Body of pancreas (tissue), 4 donors: ENCODE measurements at regions of chr2 and their contacts with region 1.

Region 1: DNA sequence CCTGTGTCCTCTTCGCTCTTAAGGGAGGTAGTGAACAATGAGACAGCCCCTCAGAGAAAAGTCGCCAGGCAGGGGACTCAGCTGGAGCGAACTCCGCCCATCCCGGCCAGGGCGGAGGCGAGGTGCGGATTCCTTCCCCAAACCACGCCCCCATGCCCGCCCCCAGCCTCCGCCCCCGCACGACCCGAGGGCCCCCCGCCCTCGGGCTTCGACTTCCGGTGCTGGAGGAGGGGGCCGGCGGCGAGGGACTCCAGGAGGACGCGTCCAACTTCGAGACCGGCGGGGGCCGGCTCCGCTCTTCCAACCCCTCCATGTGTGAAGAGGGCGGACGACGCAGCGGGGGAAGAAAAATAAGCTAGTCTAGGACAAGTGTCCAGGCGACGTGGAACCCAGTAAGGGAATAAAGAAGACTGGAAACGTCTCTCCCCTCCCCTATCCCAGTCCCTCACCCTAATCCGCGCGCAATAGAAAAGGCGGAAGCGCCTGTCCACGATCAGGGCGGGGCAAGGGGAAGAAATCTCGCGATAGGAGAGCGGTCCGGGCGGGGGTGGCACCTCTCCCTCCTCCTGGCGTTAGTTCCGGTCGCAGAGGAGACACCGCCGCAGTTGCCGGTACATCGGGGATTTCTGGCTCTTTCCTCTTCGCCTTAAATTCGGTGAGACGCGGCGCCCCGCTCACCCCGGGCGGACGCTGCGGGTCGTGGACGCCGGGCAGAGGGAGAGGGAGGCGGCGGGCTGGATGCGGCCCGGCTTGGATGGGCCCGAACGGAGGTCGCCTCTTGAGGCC is at the start of gene BZW1:
- DNase-seq: peak; percentile 95 to 96 (median 96)
- ATAC-seq: peak; percentile 93
- H3K4me3 ChIP-seq: peak within 1 kb of the TSS; percentile 91 to 99
- H3K27ac ChIP-seq: peak within 1 kb of the TSS; percentile 90 to 99 (median 96)
- H3K4me1 ChIP-seq: peaks cover 36% of the 10 kb centered on the region
- H3K27me3 ChIP-seq: no peaks in the 10 kb centered on the region
- CTCF ChIP-seq: peak in 2 of 7 experiments; percentile 2 to 12
- POLR2A ChIP-seq: peak; percentile 92 to 97 (median 96)
- total RNA-seq, gene BZW1: 45.4 to 88.3 TPM

Region 2: DNA sequence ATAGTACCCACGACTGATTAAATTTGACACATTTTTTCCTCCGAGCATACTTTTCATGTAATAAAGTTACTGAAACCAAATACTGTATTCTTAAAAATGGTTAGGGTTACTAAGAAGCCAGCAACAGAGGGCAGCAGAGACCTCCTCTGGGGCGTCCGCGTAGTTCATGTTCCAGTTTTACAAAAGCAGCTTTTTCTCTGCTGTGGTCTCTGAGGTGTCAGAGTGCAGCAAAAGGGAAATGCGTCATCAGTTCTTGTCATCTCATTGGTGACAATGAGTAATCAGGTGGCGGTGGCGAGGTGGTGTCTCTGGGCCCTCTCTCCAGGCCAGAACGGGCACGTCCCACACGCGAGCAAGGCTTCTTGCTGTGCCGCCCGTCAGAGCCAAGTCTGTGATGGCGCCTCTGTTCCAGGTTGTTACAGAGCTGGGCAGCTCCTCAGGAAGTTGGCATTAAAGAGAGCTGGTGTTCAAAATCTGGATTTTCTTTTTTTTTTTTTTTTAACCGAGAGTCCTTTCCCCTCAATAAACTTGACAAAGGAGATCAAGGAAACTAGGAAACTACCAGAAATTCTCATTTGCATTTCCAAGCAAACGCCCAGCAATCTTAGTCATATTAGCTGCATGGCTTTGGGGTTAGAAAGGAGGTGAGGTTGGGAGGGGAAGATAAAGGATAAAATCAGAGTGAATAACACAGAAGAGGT is 98.4 kb before region 1 on chr2:
- intact Hi-C with region 1: loop called (anchors 10 kb)
- DNase-seq: peak; percentile 78 to 93 (median 83)
- ATAC-seq: peak; percentile 99
- H3K4me3 ChIP-seq: no peak overlapping the region
- H3K27ac ChIP-seq: peak overlapping the region in 3 of 4 donors; percentile 41 to 80 (median 77)
- H3K4me1 ChIP-seq: peaks cover 6% of the 10 kb centered on the region
- H3K27me3 ChIP-seq: no peaks in the 10 kb centered on the region
- CTCF ChIP-seq: peak; percentile 62 to 91 (median 85)
- POLR2A ChIP-seq: peak; percentile 12 to 81 (median 81)

Region 3: DNA sequence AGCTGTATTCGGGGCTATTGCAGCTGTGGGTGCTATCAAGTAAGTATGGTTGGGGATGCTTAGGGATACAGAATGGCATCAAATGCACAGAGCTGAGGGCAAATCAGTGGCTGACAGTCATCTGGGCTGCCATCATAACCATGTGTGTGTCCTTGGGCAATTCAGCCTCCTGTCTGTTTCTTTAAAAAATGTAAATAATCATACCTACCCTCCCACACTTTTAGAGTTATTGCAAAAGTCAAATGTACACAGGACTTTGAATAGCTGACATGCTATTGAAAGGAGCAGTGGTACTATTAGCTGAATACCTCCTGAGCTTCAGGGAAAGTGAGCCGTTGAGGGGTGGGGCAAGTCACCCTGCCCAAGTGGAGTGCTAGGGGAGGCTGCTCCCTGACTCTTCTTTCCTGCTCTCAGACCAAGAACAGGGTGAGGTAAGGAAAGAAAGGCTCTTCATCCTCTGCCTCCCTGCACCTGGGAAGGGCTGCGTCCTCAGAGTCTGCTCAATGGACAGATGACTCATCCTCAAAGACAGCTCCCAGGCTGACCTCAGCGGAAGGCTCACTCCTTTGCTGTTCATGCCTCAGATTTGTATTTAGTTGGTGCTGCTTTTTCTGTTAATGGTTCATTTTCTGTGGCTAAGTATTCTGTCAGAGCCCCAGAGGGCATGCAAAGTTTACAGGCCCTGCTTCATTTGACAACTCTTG is 54.8 kb before region 1 on chr2:
- intact Hi-C with region 1: loop called (anchors 10 kb)
- DNase-seq: no peak
- ATAC-seq: no peak
- H3K4me3 ChIP-seq: no peak overlapping the region
- H3K27ac ChIP-seq: no peak overlapping the region
- H3K4me1 ChIP-seq: no peaks in the 10 kb centered on the region
- H3K27me3 ChIP-seq: no peaks in the 10 kb centered on the region
- CTCF ChIP-seq: no peak
- POLR2A ChIP-seq: no peak